Activated T-helper 1 cell treated with anti-CD3 and anti-CD28 coated beads, Interleukin-12 subunit alpha, Interleukin-12 subunit beta, Interleukin-2, Interleukin-4 antibody, amounts not matched to agents 30 ng/mL and 10 ng/mL and 1 ng/mL, durations not matched to agents 14 hours and 24 hours and 36 hours (primary cell): ENCODE measurements at regions of chr15 and their contacts with region 1.

Region 1: DNA sequence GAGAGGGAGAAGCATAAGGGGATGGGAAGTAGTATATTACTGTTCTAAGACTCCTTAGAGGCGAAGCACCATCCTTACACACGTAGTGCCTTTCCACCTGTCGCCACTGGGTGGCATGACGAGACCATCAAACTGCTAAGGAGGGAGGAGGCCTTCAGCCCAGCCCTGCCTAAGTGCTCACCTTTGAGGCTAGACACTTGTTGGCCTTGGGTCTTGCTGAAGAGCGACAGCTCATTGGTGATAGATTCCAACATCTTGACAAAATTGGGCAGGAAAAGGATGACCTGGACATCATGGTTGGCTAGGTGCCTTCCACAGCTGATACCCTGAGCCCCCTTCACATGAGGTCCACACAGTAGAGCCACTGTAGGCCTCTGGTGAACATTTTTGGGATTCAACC is 19.6 kb downstream of the CLK3 start:
- DNase-seq: peak; percentile 61
- H3K4me3 Mint-ChIP-seq: no peak overlapping the region
- H3K27ac Mint-ChIP-seq: no peak overlapping the region
- H3K4me1 Mint-ChIP-seq: peaks cover 11% of the 10 kb centered on the region
- H3K27me3 Mint-ChIP-seq: no peaks in the 10 kb centered on the region

Region 2: GRCh38 chr15:74620636-74621545 is 14.3 kb before region 1 on chr15:
- intact Hi-C with region 1: loop called (anchors 1 kb)
- DNase-seq: peak; percentile 71
- H3K4me3 Mint-ChIP-seq: no peak overlapping the region
- H3K27ac Mint-ChIP-seq: peak overlapping the region; percentile 77
- H3K4me1 Mint-ChIP-seq: peaks cover 40% of the 10 kb centered on the region
- H3K27me3 Mint-ChIP-seq: no peaks in the 10 kb centered on the region

Region 3: DNA sequence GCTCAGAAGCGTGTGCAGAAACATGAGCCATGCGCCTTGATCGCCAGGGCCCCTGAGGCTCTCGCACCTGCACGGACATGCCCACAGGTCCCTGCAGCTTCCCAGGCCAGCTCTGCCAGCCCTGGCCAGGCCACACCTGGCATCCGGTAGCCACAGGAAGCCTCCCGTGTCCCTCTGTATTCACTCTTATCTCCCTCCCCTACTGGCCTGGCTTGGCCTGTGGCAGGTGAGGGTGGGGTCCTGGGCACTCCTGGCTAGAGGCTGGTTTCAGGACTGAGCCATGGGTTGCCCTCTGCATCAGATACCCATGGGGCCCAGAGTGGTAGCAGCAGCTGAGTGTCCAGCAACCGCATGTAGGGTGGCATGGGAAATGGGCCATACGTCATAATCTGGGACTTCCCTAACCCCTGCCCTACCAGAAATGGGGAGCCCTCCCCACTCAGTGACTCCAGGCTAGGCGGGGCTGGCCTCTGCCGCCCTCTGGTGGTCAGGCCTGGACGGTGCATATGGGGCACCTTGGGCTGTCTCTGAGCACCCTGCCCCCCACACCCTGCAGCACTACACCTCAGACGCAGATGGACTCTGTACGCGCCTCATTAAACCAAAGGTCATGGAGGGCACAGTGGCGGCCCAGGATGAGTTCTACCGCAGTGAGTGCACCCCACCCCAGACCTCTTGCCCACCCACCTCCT is 164.8 kb after region 1 on chr15:
- intact Hi-C with region 1: loop called (anchors 1 kb)
- DNase-seq: peak; percentile 82
- H3K4me3 Mint-ChIP-seq: peak overlapping the region; percentile 45
- H3K27ac Mint-ChIP-seq: peak overlapping the region; percentile 81
- H3K4me1 Mint-ChIP-seq: peaks cover 37% of the 10 kb centered on the region
- H3K27me3 Mint-ChIP-seq: no peaks in the 10 kb centered on the region

Region 4: DNA sequence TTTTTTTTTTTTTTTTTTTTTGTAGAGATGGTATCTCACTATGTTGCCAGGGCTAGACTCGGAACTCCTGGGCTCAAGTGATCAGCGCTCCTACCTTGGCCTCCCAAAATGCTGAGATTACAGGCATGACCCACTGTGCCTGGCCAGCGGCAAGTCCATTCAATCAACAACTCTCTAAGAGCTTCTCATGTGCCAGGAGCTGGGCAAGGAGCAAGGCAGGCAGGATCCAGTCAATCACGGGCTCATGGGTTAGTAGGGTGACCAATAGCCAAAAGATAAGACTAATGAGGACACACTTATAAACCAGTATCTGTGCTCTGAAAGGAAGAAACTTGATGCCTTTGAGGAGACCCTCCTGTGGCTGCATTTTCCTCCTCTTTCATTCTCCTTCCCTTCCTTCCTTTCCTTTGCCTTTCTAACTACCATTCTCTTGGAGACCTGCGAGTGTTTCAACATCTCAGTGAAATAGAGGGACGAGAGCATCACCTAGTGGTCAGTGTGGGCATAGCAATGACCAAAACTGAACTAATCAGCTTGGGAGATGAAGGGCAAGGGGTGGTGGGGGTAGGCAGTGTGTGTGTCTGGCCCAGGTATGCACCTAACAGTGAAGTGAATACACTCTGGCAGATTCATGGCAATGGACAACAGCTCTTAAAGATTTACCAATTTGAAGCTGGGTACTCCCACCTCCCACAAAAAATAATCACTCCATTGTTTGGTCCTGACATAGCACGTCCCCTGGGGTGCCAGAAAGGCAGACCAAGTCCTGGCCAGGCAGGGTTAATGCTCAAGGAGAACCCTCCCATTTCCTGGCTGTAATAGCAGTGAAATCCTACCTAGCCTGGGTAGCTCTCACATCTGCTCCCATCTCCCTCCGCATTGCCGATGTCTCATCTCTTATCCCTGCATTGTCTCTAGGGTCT is 315.1 kb after region 1 on chr15:
- intact Hi-C with region 1: loop called (anchors 1 kb)
- DNase-seq: peak; percentile 71
- H3K4me3 Mint-ChIP-seq: no peak overlapping the region
- H3K27ac Mint-ChIP-seq: no peak overlapping the region
- H3K4me1 Mint-ChIP-seq: peaks cover 11% of the 10 kb centered on the region
- H3K27me3 Mint-ChIP-seq: peaks cover 2% of the 10 kb centered on the region

Region 5: GRCh38 chr15:75090388-75090734 is 455.1 kb after region 1 on chr15:
- intact Hi-C with region 1: no loop called
- DNase-seq: no peak
- H3K4me3 Mint-ChIP-seq: no peak overlapping the region
- H3K27ac Mint-ChIP-seq: no peak overlapping the region
- H3K4me1 Mint-ChIP-seq: peaks cover 22% of the 10 kb centered on the region
- H3K27me3 Mint-ChIP-seq: peaks cover 10% of the 10 kb centered on the region